Panc1 (cell line): ENCODE measurements at regions of chr5 and their contacts with region 1.

Region 1: DNA sequence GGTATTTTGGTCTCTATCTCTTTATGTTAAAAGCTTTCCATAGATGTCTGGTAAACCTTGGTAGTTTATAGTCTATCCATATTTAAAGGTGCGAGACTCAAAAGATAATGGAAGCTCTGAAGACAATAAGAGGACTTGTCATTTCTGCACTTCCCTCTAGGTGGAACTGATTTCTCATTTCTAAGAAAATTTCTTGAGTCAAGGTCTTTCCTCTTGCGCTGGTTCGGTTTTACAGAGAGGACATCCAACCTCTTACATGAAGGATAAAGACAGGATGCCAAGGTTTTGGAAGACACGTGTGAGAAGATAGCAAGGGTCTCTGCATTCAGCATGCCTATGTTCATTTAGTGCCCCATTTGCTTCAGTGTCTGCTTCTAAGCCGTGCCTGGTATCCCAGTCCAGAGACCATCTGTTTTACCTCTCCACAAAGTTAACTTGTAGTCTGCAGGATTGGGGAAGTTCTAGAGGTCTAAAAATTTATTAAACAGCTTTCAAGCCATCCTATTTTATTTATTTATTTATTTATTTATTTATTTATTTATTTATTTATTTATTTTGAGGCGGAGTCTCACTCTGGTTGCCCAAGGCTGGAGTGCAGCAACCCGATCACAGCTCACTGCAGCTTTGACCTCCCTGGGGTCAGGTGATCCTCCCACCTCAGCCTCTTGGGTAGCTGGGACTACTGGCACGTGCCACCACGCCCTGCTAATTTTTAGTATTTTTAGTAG is 41.6 kb downstream of the KIAA1191 start:
- DNase-seq: no peak
- ATAC-seq: no peak
- H3K4me3 ChIP-seq: no peak overlapping the region
- H3K27ac ChIP-seq: no peak overlapping the region
- H3K4me1 ChIP-seq: no peaks in the 10 kb centered on the region
- H3K27me3 ChIP-seq: no peaks in the 10 kb centered on the region
- CTCF ChIP-seq: peak; percentile 47

Region 2: DNA sequence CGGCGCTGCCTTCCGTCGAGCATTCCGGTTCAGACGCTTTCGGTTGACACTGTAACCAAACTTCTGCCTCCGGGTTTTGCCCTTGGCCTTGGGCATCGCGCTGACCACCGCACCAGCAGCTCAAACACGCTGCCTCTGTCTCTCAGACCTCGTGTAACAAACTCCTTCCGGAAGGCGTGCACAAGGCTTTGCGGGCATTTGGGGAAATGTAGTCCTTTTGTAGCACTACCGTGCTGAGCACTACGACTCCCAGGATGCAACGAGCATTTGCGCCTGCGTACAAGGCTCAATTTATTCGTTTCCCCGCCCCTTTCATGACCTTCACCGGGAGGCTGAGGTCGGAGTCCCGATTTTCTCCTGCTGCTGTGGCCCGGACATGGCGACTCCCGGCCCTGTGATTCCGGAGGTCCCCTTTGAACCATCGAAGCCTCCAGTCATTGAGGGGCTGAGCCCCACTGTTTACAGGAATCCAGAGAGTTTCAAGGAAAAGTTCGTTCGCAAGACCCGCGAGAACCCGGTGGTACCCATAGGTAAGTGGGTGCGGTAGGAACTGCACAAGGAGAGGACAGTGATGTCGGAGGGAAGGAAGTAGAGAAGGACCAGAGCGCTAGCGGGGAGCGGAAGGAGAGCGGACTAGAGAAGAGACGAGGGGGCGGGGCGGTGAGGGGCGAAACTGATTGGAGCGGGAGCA is 68.6 kb after region 1 on chr5 and contains the starts of genes HIGD2A and NOP16:
- CTCF ChIA-PET with region 1: no interaction called
- POLR2A ChIA-PET with region 1: no interaction called
- in situ Hi-C with region 1: no loop called
- intact Hi-C with region 1: loop called (anchors 2 kb)
- DNase-seq: peak; percentile 98
- ATAC-seq: peak; percentile 94
- H3K4me3 ChIP-seq: peak within 1 kb of the TSS; percentile 76 to 94
- H3K27ac ChIP-seq: peak within 1 kb of the TSS; percentile 100
- H3K4me1 ChIP-seq: peaks cover 17% of the 10 kb centered on the region
- H3K27me3 ChIP-seq: no peaks in the 10 kb centered on the region
- CTCF ChIP-seq: no peak
- total RNA-seq, gene HIGD2A: 162 TPM
- total RNA-seq, gene NOP16: 76.2 TPM

Region 3: DNA sequence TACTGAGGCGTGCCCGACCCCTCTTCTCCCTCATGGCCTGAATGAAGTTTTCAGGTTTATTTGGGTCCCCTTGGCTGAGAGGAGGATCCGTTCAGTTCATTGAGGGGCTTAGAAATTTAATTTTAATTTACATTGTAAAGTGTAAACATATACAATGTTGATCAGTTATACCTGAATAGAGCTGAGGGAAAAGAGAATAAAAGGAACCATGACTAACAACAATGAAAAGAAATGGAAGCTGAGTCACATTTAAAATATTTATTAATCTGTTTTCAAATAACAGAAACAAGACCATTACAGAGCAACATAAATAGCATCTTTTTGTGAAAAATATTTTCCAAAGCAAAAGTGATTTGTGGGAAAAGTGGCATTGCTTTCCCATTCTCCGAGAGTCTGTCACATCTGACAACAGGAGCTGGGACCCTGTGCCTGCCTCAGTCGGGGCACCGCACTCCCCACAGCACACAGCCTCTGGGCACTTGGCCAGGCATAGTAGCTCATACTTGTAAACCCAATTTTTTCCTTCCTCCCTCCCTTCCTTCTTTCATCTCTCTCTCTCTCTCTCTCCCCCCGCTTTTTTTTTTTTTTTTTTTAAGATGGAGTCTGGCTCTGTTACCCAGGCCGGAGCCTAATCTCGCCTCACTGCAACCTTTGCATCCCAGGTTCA is 1647.4 kb after region 1 on chr5:
- CTCF ChIA-PET with region 1: no interaction called
- POLR2A ChIA-PET with region 1: no interaction called
- in situ Hi-C with region 1: no loop called
- intact Hi-C with region 1: no loop called
- DNase-seq: no peak
- ATAC-seq: no peak
- H3K4me3 ChIP-seq: no peak overlapping the region
- H3K27ac ChIP-seq: no peak overlapping the region
- H3K4me1 ChIP-seq: no peaks in the 10 kb centered on the region
- H3K27me3 ChIP-seq: no peaks in the 10 kb centered on the region
- CTCF ChIP-seq: no peak